ENCODE measurements at regions of chr6 and their contacts with region 1.

Region 1: DNA sequence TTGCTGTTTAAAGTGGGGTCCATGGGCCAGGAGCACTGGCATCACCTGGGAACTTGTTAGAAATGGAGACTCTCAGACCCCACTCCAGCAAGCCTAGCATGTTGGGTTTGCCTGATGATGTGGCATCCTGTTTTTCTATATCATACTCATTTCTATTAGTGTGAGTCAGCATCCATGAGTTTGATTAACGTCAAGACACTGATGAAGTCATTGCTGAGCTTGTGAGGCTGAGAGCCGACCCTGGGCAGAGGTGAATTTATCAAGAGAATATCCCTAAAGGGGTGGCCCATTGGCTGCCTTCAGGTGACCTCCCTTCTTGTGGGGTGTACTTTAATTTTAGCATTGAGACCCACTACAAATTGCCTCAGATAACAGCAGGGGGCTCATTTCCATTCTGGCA is 43.4 kb upstream of the RNF144B start:
- DNase-seq: peak in 1 of 2 experiments; percentile 73
- H3K4me3 ChIP-seq: no peak overlapping the region
- H3K27ac ChIP-seq: peak overlapping the region; percentile 68
- H3K4me1 ChIP-seq: peaks cover 22% of the 10 kb centered on the region
- H3K27me3 ChIP-seq: no peaks in the 10 kb centered on the region
- CTCF ChIP-seq: no peak

Region 2: DNA sequence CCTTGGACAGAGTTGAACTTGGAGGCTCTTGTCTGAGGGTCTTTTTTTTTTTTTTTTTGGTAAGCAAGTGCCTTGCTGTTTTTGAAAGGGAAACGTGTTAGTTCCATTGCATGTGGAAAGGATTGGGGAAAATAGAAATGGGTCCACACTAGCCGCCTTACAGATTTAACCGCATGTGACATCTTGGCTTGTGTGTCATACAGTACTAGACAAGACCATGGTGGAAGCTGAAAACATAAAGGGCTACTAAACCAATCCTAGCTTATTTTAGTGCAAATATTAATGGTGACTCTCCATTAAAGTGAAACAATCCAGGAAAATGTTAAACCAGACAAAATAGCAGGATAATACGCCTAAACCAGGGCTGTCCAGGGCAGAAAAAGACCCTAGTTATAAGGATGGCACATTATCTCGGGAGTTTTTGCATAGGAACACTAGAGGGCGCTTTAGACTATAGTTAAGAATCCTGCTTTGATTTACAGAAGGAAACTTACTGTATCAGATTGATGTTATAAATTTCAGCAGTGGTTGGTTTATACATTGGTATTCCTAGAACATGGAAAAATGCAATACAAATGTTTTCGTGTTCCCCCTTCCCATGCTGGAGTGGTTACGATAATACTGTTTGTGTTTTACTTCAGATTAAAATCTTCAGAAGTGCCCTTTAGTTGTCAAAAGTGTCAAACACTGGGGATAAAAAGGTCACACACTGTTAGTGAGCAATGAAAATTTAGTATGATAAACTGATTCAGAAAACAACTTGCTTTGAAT is 19.6 kb before region 1 on chr6:
- CTCF ChIA-PET with region 1: interaction called, 10 read pairs
- POLR2A ChIA-PET with region 1: no interaction called
- intact Hi-C with region 1: no loop called
- DNase-seq: peak; percentile 27 to 51
- H3K4me3 ChIP-seq: no peak overlapping the region
- H3K27ac ChIP-seq: no peak overlapping the region
- H3K4me1 ChIP-seq: no peaks in the 10 kb centered on the region
- H3K27me3 ChIP-seq: no peaks in the 10 kb centered on the region
- CTCF ChIP-seq: peak; percentile 85

Region 3: DNA sequence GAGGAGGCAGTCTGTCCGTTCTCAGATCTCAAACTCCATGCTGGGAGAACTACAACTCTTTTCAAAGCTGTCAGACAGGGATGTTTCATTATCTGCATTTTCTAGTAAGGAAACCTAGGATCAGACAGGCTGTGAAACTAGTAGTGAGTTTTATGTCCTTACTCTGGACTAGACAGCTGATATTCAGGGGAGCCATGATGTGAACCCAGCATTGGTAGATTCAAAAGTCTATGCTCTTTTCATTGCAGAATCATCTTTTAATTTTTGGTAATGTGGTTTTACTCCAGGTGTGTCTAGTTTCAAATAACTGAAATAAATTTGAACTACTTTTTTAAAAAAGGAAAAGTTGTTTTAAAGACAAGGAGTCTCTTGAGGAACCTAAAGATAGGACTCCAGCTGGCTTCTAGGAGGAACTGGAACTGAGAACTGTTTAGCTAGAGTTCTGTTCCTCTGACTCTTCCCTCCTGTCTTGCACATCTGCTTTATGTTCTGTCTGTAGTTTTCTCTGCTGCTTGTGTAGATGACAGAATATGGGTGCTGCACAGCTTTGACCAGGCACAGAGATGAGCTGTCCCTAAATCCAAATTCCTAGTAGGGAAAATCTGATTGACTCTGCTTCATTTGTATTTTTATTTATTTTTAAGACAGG is 15.6 kb after region 1 on chr6:
- CTCF ChIA-PET with region 1: interaction called, 14 read pairs
- POLR2A ChIA-PET with region 1: interaction called, 6 read pairs
- intact Hi-C with region 1: no loop called
- DNase-seq: no peak
- H3K4me3 ChIP-seq: no peak overlapping the region
- H3K27ac ChIP-seq: no peak overlapping the region
- H3K4me1 ChIP-seq: no peaks in the 10 kb centered on the region
- H3K27me3 ChIP-seq: no peaks in the 10 kb centered on the region
- CTCF ChIP-seq: no peak

Region 4: DNA sequence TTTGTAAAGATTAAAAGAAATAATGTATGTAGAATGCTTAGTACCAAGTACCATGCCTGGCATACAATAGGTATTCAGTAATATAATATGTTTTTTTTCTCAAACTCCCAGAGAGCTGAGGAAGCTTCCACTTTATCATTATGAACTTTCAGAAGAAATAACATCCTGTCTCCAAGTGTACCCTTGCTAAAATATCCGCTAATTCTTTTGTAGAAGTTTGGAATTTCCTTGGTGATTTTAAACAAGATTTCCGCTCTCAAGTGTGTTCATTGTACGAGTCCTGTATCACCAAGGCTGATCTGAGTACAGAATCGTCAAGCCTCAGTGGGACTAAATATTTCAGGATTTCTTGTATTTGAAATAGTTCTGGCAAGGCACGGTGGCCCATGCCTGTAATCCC is 27.3 kb after region 1 on chr6:
- CTCF ChIA-PET with region 1: no interaction called
- POLR2A ChIA-PET with region 1: no interaction called
- intact Hi-C with region 1: no loop called
- DNase-seq: no peak
- H3K4me3 ChIP-seq: no peak overlapping the region
- H3K27ac ChIP-seq: no peak overlapping the region
- H3K4me1 ChIP-seq: peaks cover 4% of the 10 kb centered on the region; the same call in 1 of the 2 replicates
- H3K27me3 ChIP-seq: no peaks in the 10 kb centered on the region
- CTCF ChIP-seq: no peak

Region 5: DNA sequence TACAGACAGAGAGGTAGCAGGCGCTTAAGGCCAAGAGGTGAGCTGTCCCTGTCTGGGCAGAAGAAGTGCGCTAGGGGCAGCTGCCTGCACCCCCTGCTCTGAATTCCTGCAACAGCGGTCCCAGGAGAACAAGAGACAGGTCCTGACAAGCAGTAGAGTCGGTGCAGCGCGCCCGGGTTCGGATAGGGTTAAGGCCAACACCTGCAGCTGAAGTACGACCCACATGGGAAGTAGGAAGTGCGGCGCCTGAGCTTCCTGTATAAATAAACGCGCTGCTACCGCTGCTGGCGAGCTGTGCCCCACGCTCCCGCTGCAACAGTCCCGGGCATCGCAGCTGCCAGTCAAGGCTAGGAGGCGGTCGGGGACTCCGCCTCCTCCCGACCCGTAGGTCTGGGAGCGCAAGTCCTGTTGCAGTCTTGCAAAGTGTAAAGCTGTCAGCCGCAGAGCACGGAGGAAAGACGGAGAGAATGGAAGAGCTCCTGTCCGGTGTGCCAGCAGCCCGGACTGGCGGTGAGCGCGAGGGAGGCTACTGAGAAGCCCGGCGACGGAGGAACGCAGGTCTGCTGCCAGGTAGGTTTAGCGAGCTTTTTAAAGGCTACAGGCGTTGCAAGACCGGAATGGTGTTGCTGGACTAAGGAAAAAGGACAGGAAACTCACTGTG is 43.5 kb after region 1 on chr6 and contains the start of gene RNF144B:
- CTCF ChIA-PET with region 1: no interaction called
- POLR2A ChIA-PET with region 1: interaction called, 5 read pairs
- intact Hi-C with region 1: loop called (anchors 5 kb)
- DNase-seq: peak; percentile 87 to 89
- H3K4me3 ChIP-seq: peak within 1 kb of the TSS; percentile 80
- H3K27ac ChIP-seq: peak within 1 kb of the TSS; percentile 76
- H3K4me1 ChIP-seq: peaks cover 39% of the 10 kb centered on the region
- H3K27me3 ChIP-seq: no peaks in the 10 kb centered on the region
- CTCF ChIP-seq: no peak
- total RNA-seq, gene RNF144B: 26.2 and 34.5 TPM in 2 replicates

Region 6: DNA sequence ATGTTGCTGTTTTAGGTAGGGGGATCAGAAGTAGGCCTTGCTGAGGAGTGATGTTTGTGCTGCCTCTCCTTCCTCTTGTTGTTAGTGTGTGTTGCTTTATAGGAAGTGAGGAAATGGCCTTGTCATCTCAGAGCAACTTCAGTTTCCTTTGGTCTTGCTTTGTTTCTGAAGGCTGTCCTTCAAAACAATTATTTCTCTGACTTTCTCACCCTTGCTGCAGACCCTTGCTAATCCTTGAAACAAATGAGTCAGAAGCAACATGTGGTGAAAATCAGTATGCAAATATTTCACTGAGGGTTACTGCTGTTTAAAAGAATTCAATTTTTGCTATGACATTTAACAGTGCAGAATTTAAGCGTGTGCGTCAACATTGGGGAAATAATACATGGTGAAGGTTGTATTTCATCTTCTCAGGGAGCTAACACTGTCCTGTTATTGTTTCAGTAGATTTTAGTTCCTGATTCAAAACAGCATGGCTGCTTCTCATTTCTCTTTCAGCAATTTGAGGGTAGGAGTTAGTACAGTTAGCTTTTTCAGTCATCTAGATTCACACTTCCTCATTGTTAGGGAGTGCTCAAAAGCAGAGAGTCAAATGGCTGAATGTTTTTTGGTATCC is 57.2 kb after region 1 on chr6:
- CTCF ChIA-PET with region 1: no interaction called
- POLR2A ChIA-PET with region 1: no interaction called
- intact Hi-C with region 1: no loop called
- DNase-seq: no peak
- H3K4me3 ChIP-seq: no peak overlapping the region
- H3K27ac ChIP-seq: no peak overlapping the region
- H3K4me1 ChIP-seq: peaks cover 13% of the 10 kb centered on the region
- H3K27me3 ChIP-seq: no peaks in the 10 kb centered on the region
- CTCF ChIP-seq: no peak

Region 7: GRCh38 chr6:18432180-18432579 is 88.4 kb after region 1 on chr6:
- CTCF ChIA-PET with region 1: no interaction called
- POLR2A ChIA-PET with region 1: interaction called, 8 read pairs
- intact Hi-C with region 1: loop called (anchors 1 kb)
- DNase-seq: peak in 1 of 2 experiments; percentile 51
- H3K4me3 ChIP-seq: no peak overlapping the region
- H3K27ac ChIP-seq: peak overlapping the region; percentile 89
- H3K4me1 ChIP-seq: peaks cover 50% of the 10 kb centered on the region
- H3K27me3 ChIP-seq: no peaks in the 10 kb centered on the region
- CTCF ChIP-seq: no peak

Region 8: GRCh38 chr6:18457065-18457812 is 113.5 kb after region 1 on chr6:
- CTCF ChIA-PET with region 1: interaction called, 10 read pairs
- POLR2A ChIA-PET with region 1: no interaction called
- intact Hi-C with region 1: no loop called
- DNase-seq: no peak
- H3K4me3 ChIP-seq: no peak overlapping the region
- H3K27ac ChIP-seq: no peak overlapping the region
- H3K4me1 ChIP-seq: no peaks in the 10 kb centered on the region
- H3K27me3 ChIP-seq: no peaks in the 10 kb centered on the region
- CTCF ChIP-seq: no peak

Measured in PC-9 (cell line).